CD8-positive, alpha-beta T cell (primary cell): ENCODE measurements at regions of chr18 and their contacts with region 1.

Region 1: GRCh38 chr18:21600526-21601410 is at the start of gene ESCO1:
- DNase-seq: peak; percentile 87 to 99 (median 92)
- ATAC-seq: peak; percentile 87
- H3K4me3 ChIP-seq: peak within 1 kb of the TSS; percentile 88 to 100
- H3K4me3 Mint-ChIP-seq: peak within 1 kb of the TSS; percentile 95
- H3K27ac ChIP-seq: peak within 1 kb of the TSS; percentile 98 to 100
- H3K27ac Mint-ChIP-seq: peak within 1 kb of the TSS; percentile 98
- H3K4me1 ChIP-seq: peaks cover 24% of the 10 kb centered on the region
- H3K4me1 Mint-ChIP-seq: peaks cover 41% of the 10 kb centered on the region
- H3K27me3 ChIP-seq: no peaks in the 10 kb centered on the region
- H3K27me3 Mint-ChIP-seq: no peaks in the 10 kb centered on the region
- CTCF ChIP-seq: peak; percentile 97
- total RNA-seq, gene ESCO1: 37.3 to 38.8 TPM

Region 2: DNA sequence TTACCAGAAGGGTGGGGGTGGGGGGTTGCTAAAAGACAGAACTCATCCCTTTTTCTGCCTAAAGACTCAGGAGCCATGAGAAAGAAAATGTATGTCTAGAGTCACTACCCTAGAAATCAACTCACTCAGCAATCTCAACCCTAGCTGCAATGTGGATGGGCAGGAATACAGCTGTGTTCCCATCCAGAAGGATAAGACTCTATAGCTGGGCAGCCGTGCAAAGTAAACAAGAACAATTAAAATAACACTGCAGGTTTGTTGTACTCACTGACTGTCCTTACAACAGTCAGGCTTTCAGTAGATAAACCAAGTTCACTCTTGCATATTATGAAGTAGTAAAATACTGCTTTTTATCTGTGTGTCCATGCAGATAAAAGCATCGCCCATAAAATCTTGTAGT is 74.3 kb before region 1 on chr18:
- CTCF ChIA-PET with region 1: no interaction called
- POLR2A ChIA-PET with region 1: no interaction called
- intact Hi-C with region 1: loop called in 1 of 2 experiments (anchors 10 kb)
- DNase-seq: no peak
- ATAC-seq: no peak
- H3K4me3 ChIP-seq: no peak overlapping the region
- H3K4me3 Mint-ChIP-seq: no peak overlapping the region
- H3K27ac ChIP-seq: no peak overlapping the region
- H3K27ac Mint-ChIP-seq: no peak overlapping the region
- H3K4me1 ChIP-seq: no peaks in the 10 kb centered on the region
- H3K4me1 Mint-ChIP-seq: no peaks in the 10 kb centered on the region
- H3K27me3 ChIP-seq: no peaks in the 10 kb centered on the region
- H3K27me3 Mint-ChIP-seq: no peaks in the 10 kb centered on the region
- CTCF ChIP-seq: no peak

Region 3: GRCh38 chr18:21612125-21612991 is 11.6 kb after region 1 on chr18 and contains the start of gene SNRPD1:
- CTCF ChIA-PET with region 1: interaction called, 83 read pairs
- POLR2A ChIA-PET with region 1: interaction called, 98 read pairs
- intact Hi-C with region 1: loop called (anchors 1 kb)
- DNase-seq: peak; percentile 78 to 94 (median 86)
- ATAC-seq: peak; percentile 98
- H3K4me3 ChIP-seq: peak within 1 kb of the TSS; percentile 83 to 94
- H3K4me3 Mint-ChIP-seq: peak within 1 kb of the TSS; percentile 98
- H3K27ac ChIP-seq: peak within 1 kb of the TSS; percentile 84 to 87
- H3K27ac Mint-ChIP-seq: peak within 1 kb of the TSS; percentile 98
- H3K4me1 ChIP-seq: peaks cover 29% of the 10 kb centered on the region
- H3K4me1 Mint-ChIP-seq: peaks cover 44% of the 10 kb centered on the region
- H3K27me3 ChIP-seq: no peaks in the 10 kb centered on the region
- H3K27me3 Mint-ChIP-seq: no peaks in the 10 kb centered on the region
- CTCF ChIP-seq: peak; percentile 94
- total RNA-seq, gene SNRPD1: 34.5 to 41.1 TPM

Region 4: GRCh38 chr18:21682371-21683051 is 81.7 kb after region 1 on chr18:
- CTCF ChIA-PET with region 1: interaction called, 4 read pairs
- POLR2A ChIA-PET with region 1: interaction called, 16 read pairs
- intact Hi-C with region 1: loop called in 1 of 2 experiments (anchors 2 kb)
- DNase-seq: peak in 6 of 9 experiments; percentile 5 to 78 (median 46)
- ATAC-seq: peak; percentile 91
- H3K4me3 ChIP-seq: peak overlapping the region; percentile 56 to 58
- H3K4me3 Mint-ChIP-seq: no peak overlapping the region
- H3K27ac ChIP-seq: peak overlapping the region; percentile 75 to 90
- H3K27ac Mint-ChIP-seq: no peak overlapping the region
- H3K4me1 ChIP-seq: no peaks in the 10 kb centered on the region
- H3K4me1 Mint-ChIP-seq: peaks cover 24% of the 10 kb centered on the region
- H3K27me3 ChIP-seq: no peaks in the 10 kb centered on the region
- H3K27me3 Mint-ChIP-seq: no peaks in the 10 kb centered on the region
- CTCF ChIP-seq: no peak

Region 5: GRCh38 chr18:21740724-21741510 is 140.1 kb after region 1 on chr18 and contains the start of gene MIB1:
- CTCF ChIA-PET with region 1: interaction called, 8 read pairs
- POLR2A ChIA-PET with region 1: interaction called, 33 read pairs
- intact Hi-C with region 1: loop called (anchors 1 to 2 kb)
- DNase-seq: peak; percentile 22 to 100 (median 98)
- ATAC-seq: peak; percentile 56
- H3K4me3 ChIP-seq: peak within 1 kb of the TSS; percentile 71 to 93
- H3K4me3 Mint-ChIP-seq: peak within 1 kb of the TSS; percentile 97
- H3K27ac ChIP-seq: peak within 1 kb of the TSS; percentile 75 to 78
- H3K27ac Mint-ChIP-seq: peak within 1 kb of the TSS; percentile 96
- H3K4me1 ChIP-seq: peaks cover 20% of the 10 kb centered on the region
- H3K4me1 Mint-ChIP-seq: peaks cover 36% of the 10 kb centered on the region
- H3K27me3 ChIP-seq: no peaks in the 10 kb centered on the region
- H3K27me3 Mint-ChIP-seq: no peaks in the 10 kb centered on the region
- CTCF ChIP-seq: no peak
- total RNA-seq, gene MIB1: 8.7 to 8.9 TPM